Activated T-helper 1 cell treated with anti-CD3 and anti-CD28 coated beads, Interleukin-12 subunit alpha, Interleukin-12 subunit beta, Interleukin-2, Interleukin-4 antibody, amounts not matched to agents 30 ng/mL and 10 ng/mL and 1 ng/mL, durations not matched to agents 14 hours and 24 hours and 36 hours (primary cell): ENCODE measurements at regions of chr1 and their contacts with region 1.

Region 1: GRCh38 chr1:229479660-229480399 is 28.3 kb downstream of the NUP133 start:
- DNase-seq: no peak
- H3K4me3 Mint-ChIP-seq: no peak overlapping the region
- H3K27ac Mint-ChIP-seq: no peak overlapping the region
- H3K4me1 Mint-ChIP-seq: peaks cover 17% of the 10 kb centered on the region
- H3K27me3 Mint-ChIP-seq: no peaks in the 10 kb centered on the region

Region 2: DNA sequence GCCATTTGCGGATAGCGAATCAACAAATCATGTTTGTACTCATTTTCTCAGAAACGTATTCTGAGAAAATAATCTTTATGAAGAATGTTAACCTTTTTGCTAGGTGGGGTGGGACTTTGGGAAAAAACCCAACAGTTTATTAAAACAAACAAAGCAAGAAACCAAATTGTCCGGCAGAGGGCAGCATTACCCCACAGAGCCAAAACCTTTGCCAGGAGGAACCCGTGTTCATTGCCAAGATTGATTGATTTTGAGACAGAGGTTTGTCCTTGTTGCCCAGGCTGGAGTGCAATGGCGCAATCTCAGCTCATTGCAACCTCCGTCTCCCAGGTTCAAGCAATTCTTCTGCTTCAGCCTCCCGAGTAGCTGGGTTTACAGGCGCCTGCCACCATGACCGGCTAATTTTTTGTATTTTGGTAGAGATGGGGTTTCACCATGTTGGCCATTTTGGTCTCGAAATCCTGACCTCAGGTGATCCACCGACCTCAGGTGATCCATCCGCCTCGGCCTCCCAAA is 815.4 kb before region 1 on chr1:
- intact Hi-C with region 1: loop called (anchors 1 kb)
- DNase-seq: peak; percentile 55
- H3K4me3 Mint-ChIP-seq: no peak overlapping the region
- H3K27ac Mint-ChIP-seq: no peak overlapping the region
- H3K4me1 Mint-ChIP-seq: no peaks in the 10 kb centered on the region
- H3K27me3 Mint-ChIP-seq: peaks cover 15% of the 10 kb centered on the region

Region 3: DNA sequence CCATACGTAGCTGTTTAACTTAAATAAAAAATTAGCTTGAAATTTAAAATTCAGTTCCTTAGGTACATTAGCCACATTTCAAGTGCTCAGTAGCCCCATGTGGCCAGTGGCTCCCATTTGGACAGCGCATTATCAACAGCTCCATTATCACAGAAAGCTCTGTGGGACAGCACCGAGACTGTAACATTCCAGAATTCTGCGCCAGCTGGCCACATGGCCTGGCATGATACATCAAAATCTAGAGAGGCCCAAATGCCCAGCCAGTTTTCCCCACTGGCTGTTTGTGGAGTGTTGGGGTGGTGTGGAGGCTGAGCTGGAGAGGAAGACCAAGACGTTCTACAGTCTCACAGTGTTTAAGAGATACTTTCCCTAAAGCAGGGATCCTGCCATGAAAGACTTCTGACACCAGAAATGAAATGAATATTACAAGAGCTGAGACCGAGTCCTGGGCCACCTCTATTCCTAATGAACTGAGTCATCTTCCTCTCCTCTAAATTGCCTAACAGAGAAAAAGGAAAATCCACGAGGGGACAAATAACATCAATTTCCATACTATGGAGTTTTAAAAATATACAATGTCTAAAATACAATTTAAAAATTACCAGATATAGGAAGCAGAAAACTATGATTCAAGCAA is 18.7 kb before region 1 on chr1:
- intact Hi-C with region 1: no loop called
- DNase-seq: no peak
- H3K4me3 Mint-ChIP-seq: no peak overlapping the region
- H3K27ac Mint-ChIP-seq: no peak overlapping the region
- H3K4me1 Mint-ChIP-seq: no peaks in the 10 kb centered on the region
- H3K27me3 Mint-ChIP-seq: no peaks in the 10 kb centered on the region